GM12878 (cell line): ENCODE measurements at regions of chr7 and their contacts with region 1.

Region 1: GRCh38 chr7:112495810-112496462 is 15.1 kb downstream of the LSMEM1 start:
- DNase-seq: no peak
- ATAC-seq: peak; percentile 83
- H3K4me3 ChIP-seq: no peak overlapping the region
- H3K27ac ChIP-seq: no peak overlapping the region
- H3K4me1 ChIP-seq: no peaks in the 10 kb centered on the region; the same call in 1 of the 2 replicates
- H3K27me3 ChIP-seq: no peaks in the 10 kb centered on the region
- CTCF ChIP-seq: peak; percentile 49 to 74 (median 60); a peak in 5 of 6 replicates
- EP300 ChIP-seq: no peak
- POLR2A ChIP-seq: no peak
- RAD21 ChIP-seq: peak; percentile 89

Region 2: GRCh38 chr7:111752022-111752582 is 743.8 kb before region 1 on chr7:
- CTCF ChIA-PET with region 1: interaction called, 20 read pairs
- POLR2A ChIA-PET with region 1: no interaction called
- RAD21 ChIA-PET with region 1: interaction called, 11 read pairs
- SMC1A ChIA-PET with region 1: interaction called, 11 read pairs
- in situ Hi-C with region 1: no loop called
- intact Hi-C with region 1: loop called (anchors 1 kb)
- DNase-seq: no peak
- ATAC-seq: peak; percentile 96
- H3K4me3 ChIP-seq: no peak overlapping the region
- H3K27ac ChIP-seq: no peak overlapping the region
- H3K4me1 ChIP-seq: no peaks in the 10 kb centered on the region
- H3K27me3 ChIP-seq: no peaks in the 10 kb centered on the region
- CTCF ChIP-seq: peak; percentile 61 to 88 (median 81)
- EP300 ChIP-seq: no peak
- POLR2A ChIP-seq: no peak
- RAD21 ChIP-seq: peak; percentile 69

Region 3: GRCh38 chr7:112467867-112468266 is 28.1 kb before region 1 on chr7:
- CTCF ChIA-PET with region 1: interaction called, 10 read pairs
- POLR2A ChIA-PET with region 1: no interaction called
- RAD21 ChIA-PET with region 1: no interaction called
- SMC1A ChIA-PET with region 1: interaction called, 3 read pairs
- in situ Hi-C with region 1: no loop called
- intact Hi-C with region 1: no loop called
- DNase-seq: no peak
- ATAC-seq: no peak
- H3K4me3 ChIP-seq: no peak overlapping the region
- H3K27ac ChIP-seq: no peak overlapping the region
- H3K4me1 ChIP-seq: no peaks in the 10 kb centered on the region
- H3K27me3 ChIP-seq: no peaks in the 10 kb centered on the region
- CTCF ChIP-seq: no peak
- EP300 ChIP-seq: no peak
- POLR2A ChIP-seq: no peak
- RAD21 ChIP-seq: no peak

Region 4: DNA sequence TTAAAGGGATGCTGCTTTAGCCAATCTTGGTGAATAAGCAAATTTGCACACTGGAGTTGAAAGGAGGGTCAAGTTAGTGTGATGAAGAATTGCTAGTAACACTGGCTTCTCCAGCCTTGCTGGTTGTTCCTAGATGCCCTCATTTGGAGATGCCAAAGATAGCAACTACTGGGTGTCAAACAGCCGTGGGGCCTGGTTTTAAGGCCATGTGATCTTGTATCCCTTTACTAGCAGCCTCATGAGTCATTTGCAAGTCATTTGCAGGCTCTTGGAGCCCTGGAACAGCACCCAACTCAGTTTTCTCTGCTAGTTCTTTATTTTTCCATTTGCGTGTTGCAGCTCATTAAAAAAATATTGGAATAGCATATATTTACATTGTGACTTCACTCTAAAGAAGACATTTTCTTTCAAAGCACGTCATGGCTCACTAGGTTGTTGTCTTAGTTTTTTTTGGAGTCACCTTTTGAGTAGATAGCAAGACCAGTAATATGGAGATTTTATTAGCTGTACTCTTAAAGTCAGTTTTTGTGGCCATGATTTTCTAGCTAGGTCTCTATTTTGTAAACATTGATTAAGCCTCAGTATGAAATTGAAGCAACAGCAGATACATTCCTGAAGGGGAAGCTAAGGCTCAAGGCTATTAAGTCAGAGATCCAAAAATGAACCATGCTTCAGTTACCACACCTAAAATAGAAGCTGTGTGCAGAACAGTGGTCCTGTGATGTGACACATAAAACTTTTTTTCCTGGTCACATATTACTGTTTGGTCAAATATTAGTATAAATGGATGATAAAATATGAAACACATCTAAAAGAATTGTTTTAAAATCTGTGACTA is 13.9 kb before region 1 on chr7:
- CTCF ChIA-PET with region 1: interaction called, 16 read pairs
- POLR2A ChIA-PET with region 1: interaction called, 5 read pairs
- RAD21 ChIA-PET with region 1: interaction called, 5 read pairs
- SMC1A ChIA-PET with region 1: interaction called, 12 read pairs
- in situ Hi-C with region 1: no loop called
- intact Hi-C with region 1: no loop called
- DNase-seq: no peak
- ATAC-seq: no peak
- H3K4me3 ChIP-seq: no peak overlapping the region
- H3K27ac ChIP-seq: no peak overlapping the region
- H3K4me1 ChIP-seq: no peaks in the 10 kb centered on the region
- H3K27me3 ChIP-seq: no peaks in the 10 kb centered on the region
- CTCF ChIP-seq: no peak
- EP300 ChIP-seq: no peak
- POLR2A ChIP-seq: no peak
- RAD21 ChIP-seq: no peak